Dorsolateral prefrontal cortex (tissue), 120 donors: ENCODE measurements at regions of chr9 and their contacts with region 1.

Region 1: GRCh38 chr9:127980706-127981558 is at the start of gene EEIG1:
- DNase-seq: peak; percentile 89 to 99 (median 96)
- H3K4me3 ChIP-seq: peak within 1 kb of the TSS; percentile 69 to 99 (median 90)
- H3K27ac ChIP-seq: peak within 1 kb of the TSS; percentile 64 to 100 (median 97)
- H3K27me3 ChIP-seq: no peaks in the 10 kb centered on the region
- CTCF ChIP-seq: peak in 7 of 56 donors; percentile 2 to 38 (median 26)
- total RNA-seq, gene EEIG1: 73.1 to 300 (median 141) TPM

Region 2: GRCh38 chr9:127950513-127951289 is 30.2 kb before region 1 on chr9:
- intact Hi-C with region 1: loop called (anchors 1 kb)
- DNase-seq: peak in 9 of 10 donors; percentile 90 to 98 (median 95)
- H3K4me3 ChIP-seq: peak overlapping the region; percentile 18 to 75 (median 55)
- H3K27ac ChIP-seq: peak overlapping the region; percentile 78 to 100 (median 97)
- H3K27me3 ChIP-seq: no peaks in the 10 kb centered on the region
- CTCF ChIP-seq: peak in 1 of 56 donors; percentile 22

Region 3: GRCh38 chr9:128034821-128035764 is 54.2 kb after region 1 on chr9:
- intact Hi-C with region 1: loop called (anchors 5 to 10 kb)
- DNase-seq: peak in 9 of 10 donors; percentile 46 to 66 (median 61)
- H3K4me3 ChIP-seq: no peak overlapping the region
- H3K27ac ChIP-seq: peak overlapping the region in 13 of 59 donors; percentile 16 to 73 (median 44)
- H3K27me3 ChIP-seq: no peaks in the 10 kb centered on the region
- CTCF ChIP-seq: peak; percentile 69 to 97 (median 89)

Region 4: DNA sequence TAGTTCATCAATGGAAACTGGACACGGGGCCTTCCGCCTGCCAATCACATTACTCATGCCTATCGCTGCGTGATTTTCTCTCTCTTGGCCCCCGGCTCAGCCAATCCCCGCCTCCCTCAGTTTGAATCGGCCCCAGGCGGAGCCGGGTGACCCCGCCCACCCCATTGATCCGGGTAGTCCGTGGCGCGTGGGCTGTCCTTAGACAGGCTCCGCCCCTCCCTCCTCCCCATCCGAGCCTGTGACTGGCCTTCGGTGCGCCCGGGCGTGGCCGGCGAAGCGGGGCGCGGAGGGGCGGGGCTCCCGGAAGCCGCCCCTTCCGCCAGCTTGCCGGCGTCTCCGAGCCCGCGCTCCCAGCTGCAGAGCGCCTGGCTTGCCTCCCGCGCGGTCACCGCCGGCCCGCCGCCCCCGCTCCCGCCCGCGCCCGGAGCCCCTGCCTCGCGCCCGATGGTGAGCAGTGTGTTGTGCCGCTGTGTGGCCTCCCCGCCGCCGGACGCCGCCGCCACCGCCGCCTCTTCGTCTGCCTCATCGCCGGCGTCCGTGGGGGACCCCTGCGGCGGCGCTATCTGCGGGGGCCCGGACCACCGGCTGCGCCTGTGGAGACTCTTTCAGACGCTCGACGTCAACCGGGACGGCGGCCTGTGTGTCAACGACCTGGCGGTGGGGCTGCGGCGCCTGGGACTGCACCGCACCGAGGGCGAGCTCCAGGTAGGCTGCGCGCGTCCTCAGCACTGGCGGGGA is 87.1 kb after region 1 on chr9 and contains the start of gene SLC25A25:
- intact Hi-C with region 1: loop called (anchors 2 to 5 kb)
- DNase-seq: peak; percentile 99 to 100 (median 100)
- H3K4me3 ChIP-seq: peak within 1 kb of the TSS; percentile 64 to 97 (median 90)
- H3K27ac ChIP-seq: peak within 1 kb of the TSS; percentile 68 to 100 (median 98)
- H3K27me3 ChIP-seq: no peaks in the 10 kb centered on the region
- CTCF ChIP-seq: peak in 11 of 56 donors; percentile 6 to 38 (median 18)
- total RNA-seq, gene SLC25A25: 17.8 to 66.6 (median 35.3) TPM